ENCODE measurements at regions of chr1 and their contacts with region 1.

Region 1: GRCh38 chr1:201792534-201793305 is 36.2 kb upstream of the IPO9 start:
- DNase-seq: peak; percentile 73 to 94 (median 81)
- H3K4me3 ChIP-seq: no peak overlapping the region
- H3K27ac ChIP-seq: peak overlapping the region in 4 of 5 donors; percentile 5 to 76 (median 43)
- H3K4me1 ChIP-seq: peaks cover 11 to 40% of the 10 kb centered on the region in 2 donors
- H3K27me3 ChIP-seq: no peaks in the 10 kb centered on the region
- CTCF ChIP-seq: peak; percentile 95 to 99 (median 98)
- POLR2A ChIP-seq: no peak

Region 2: DNA sequence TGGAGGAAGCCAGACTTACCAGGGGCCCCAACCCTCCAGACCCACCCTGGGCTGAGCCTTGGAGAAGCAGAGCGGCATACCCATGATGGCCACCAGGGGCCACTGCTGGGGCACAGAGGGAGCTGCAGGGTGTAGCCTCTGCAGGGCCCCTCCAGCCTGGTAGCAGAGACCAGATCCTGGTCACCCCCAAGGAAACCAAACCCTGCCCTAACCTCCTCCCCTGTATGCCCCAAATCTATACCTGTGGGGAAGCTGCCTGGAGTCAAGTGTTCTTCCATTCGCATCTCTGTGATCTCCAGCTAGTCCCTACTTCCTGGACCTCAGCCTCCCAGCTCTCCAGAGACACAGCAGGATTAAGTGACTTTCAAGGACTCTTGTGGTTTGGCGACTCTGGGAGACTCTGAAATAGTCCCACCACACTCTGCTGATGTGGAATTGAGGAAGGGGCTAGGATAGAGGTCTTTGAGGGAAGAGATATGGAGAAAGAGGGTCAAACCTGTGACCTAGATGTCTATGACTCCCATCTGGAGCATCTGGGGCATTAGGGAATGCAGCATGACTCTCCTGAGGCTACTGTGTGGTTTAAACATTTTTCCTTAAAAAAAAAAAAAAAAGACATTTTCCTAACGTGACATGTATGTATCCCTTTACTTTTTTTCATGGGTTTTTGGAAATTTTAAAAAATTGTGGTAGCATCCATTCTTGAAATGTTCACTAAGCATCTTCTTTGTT is 83.0 kb before region 1 on chr1:
- intact Hi-C with region 1: loop called (anchors 2 kb)
- DNase-seq: peak; percentile 61 to 83 (median 73)
- H3K4me3 ChIP-seq: no peak overlapping the region
- H3K27ac ChIP-seq: peak overlapping the region in 1 of 5 donors; percentile 9
- H3K4me1 ChIP-seq: peaks cover 18 to 38% of the 10 kb centered on the region in 2 donors
- H3K27me3 ChIP-seq: no peaks in the 10 kb centered on the region
- CTCF ChIP-seq: peak; percentile 78 to 96 (median 88)
- POLR2A ChIP-seq: no peak

Region 3: DNA sequence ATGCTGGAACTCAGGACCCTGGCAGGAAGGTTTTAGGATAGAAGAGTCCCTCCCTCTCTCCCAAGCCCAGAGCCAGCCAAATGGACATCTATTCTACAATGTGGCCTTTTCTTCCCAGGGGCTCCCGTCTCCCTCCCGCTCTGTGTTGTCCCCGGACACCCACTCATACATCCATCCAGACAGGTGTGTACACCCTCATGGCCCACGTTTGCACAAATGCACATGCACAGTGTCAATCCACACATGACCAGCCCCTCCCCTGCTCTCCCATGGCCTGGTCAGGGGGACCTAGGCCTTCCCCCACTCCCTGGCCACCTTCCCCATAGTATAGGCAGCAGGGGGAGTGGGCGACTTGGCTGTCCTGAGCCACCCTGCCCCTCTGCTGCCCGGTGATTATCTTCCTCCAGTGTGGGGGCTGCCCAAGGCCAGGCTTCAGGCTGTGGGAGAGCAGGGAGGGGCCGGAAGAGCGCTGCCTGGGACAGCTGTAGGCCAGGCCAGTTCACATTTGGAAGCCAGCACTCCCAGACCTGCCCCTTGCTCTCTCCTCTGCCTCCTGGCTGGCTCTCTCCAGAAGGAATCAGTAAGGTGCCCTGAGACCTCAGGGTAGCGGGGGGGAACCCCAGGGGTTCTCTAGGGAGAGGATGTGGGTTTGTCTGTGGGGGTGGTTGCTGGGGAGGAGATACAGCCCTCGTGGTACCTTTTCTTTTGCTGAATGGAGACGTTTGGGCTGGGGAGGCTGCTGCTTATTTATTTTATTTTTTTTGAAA is 371.7 kb after region 1 on chr1:
- intact Hi-C with region 1: no loop called
- DNase-seq: no peak
- H3K4me3 ChIP-seq: no peak overlapping the region
- H3K27ac ChIP-seq: peak overlapping the region in 2 of 5 donors; percentile 52 to 53
- H3K4me1 ChIP-seq: peaks cover 0 to 4% of the 10 kb centered on the region in 2 donors
- H3K27me3 ChIP-seq: no peaks in the 10 kb centered on the region
- CTCF ChIP-seq: no peak
- POLR2A ChIP-seq: no peak

Region 4: DNA sequence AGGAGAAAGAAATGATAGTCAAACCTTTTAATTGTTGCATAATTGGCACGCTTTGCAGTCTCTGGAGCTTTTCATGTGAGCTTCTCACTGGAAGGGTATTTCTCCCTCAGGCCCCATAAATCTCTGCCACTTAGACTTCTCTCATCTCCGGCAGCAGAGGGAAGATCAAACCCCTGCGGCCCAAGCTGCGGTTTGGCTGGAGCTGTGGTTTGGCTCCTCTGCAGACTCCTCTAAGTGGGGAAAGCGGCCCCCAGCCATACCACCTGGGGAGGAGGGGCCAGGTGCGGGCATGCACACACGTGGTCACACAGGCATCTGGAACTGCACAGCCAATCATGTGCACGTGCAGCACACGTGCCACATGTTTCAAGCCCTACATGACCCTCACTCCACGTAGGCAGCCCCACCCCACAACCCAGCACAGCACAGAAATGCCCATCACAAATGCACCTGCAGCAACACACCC is 490.7 kb after region 1 on chr1:
- intact Hi-C with region 1: no loop called
- DNase-seq: peak in 2 of 7 donors; percentile 19 to 25
- H3K4me3 ChIP-seq: no peak overlapping the region
- H3K27ac ChIP-seq: peak overlapping the region in 1 of 5 donors; percentile 46
- H3K4me1 ChIP-seq: peaks cover 12 to 35% of the 10 kb centered on the region in 2 donors
- H3K27me3 ChIP-seq: no peaks in the 10 kb centered on the region
- CTCF ChIP-seq: no peak
- POLR2A ChIP-seq: no peak